Activated T-helper 1 cell treated with anti-CD3 and anti-CD28 coated beads, Interleukin-12 subunit alpha, Interleukin-12 subunit beta, Interleukin-2, Interleukin-4 antibody, amounts not matched to agents 30 ng/mL and 10 ng/mL and 1 ng/mL, durations not matched to agents 14 hours and 24 hours and 36 hours (primary cell): ENCODE measurements at regions of chr1 and their contacts with region 1.

Region 1: GRCh38 chr1:25675729-25676476 is 59.3 kb downstream of the MAN1C1 start:
- DNase-seq: peak; percentile 83
- H3K4me3 Mint-ChIP-seq: peak overlapping the region; percentile 47
- H3K27ac Mint-ChIP-seq: peak overlapping the region; percentile 85
- H3K4me1 Mint-ChIP-seq: peaks cover 54% of the 10 kb centered on the region
- H3K27me3 Mint-ChIP-seq: peaks cover 81% of the 10 kb centered on the region

Region 2: GRCh38 chr1:25543425-25544242 is 132.3 kb before region 1 on chr1 and contains the start of gene LDLRAP1:
- intact Hi-C with region 1: no loop called
- DNase-seq: peak; percentile 59
- H3K4me3 Mint-ChIP-seq: peak within 1 kb of the TSS; percentile 76
- H3K27ac Mint-ChIP-seq: no peak within 1 kb of the TSS
- H3K4me1 Mint-ChIP-seq: peaks cover 8% of the 10 kb centered on the region
- H3K27me3 Mint-ChIP-seq: peaks cover 11% of the 10 kb centered on the region
- total RNA-seq, gene LDLRAP1: 4.6 and 5.3 TPM in 2 replicates

Region 3: GRCh38 chr1:25616095-25616986 is 59.6 kb before region 1 on chr1 and contains the start of gene MAN1C1:
- intact Hi-C with region 1: loop called (anchors 1 kb)
- DNase-seq: peak; percentile 76
- H3K4me3 Mint-ChIP-seq: peak within 1 kb of the TSS; percentile 63
- H3K27ac Mint-ChIP-seq: peak within 1 kb of the TSS; percentile 57
- H3K4me1 Mint-ChIP-seq: peaks cover 45% of the 10 kb centered on the region
- H3K27me3 Mint-ChIP-seq: peaks cover 71% of the 10 kb centered on the region
- total RNA-seq, gene MAN1C1: 0.83 and 0.98 TPM in 2 replicates

Region 4: GRCh38 chr1:25692560-25692959 is 16.7 kb after region 1 on chr1:
- intact Hi-C with region 1: loop called (anchors 2 kb)
- DNase-seq: no peak
- H3K4me3 Mint-ChIP-seq: no peak overlapping the region
- H3K27ac Mint-ChIP-seq: no peak overlapping the region
- H3K4me1 Mint-ChIP-seq: peaks cover 8% of the 10 kb centered on the region
- H3K27me3 Mint-ChIP-seq: peaks cover 75% of the 10 kb centered on the region

Region 5: DNA sequence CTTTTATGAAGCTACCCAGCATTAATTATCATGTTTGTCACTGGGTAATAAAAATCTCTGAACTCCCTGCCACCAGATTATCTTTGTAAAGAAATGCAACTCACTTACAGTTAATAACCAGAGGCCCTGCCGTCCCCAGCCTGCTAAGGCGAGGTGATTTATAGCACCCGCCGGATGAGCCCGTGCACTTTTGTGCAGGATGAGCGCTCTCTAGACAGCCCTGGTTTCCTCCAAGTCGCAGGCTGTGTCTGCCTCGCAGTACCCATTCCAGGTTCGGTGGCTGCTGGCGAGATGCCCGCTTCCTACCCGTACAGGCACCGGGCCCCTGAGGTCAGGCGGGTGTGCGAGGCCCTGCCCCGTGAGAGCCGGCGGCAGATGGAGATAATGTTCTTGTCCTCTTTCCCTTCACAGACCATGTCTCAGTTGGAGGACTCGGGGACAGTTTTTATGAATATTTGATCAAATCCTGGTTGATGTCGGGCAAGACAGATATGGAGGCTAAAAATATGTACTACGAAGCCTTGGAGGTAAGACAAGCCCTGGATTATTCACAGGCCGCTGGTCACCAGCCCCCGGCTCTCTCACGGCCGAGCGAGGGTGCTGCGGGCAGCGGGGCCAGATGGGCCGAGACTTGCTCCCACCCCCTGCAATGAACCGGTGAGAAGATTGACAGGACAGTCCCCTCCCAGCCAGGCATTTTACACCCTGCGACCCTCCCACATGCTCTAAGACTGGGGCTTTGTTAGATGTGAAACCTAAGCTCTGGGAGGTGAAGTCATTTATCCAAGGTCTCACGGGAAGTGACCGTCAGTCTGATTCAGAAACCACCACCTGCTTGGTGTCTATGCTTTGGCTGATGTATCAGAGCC is 95.6 kb after region 1 on chr1:
- intact Hi-C with region 1: loop called (anchors 1 kb)
- DNase-seq: no peak
- H3K4me3 Mint-ChIP-seq: no peak overlapping the region
- H3K27ac Mint-ChIP-seq: no peak overlapping the region
- H3K4me1 Mint-ChIP-seq: peaks cover 29% of the 10 kb centered on the region
- H3K27me3 Mint-ChIP-seq: peaks cover 42% of the 10 kb centered on the region

Region 6: GRCh38 chr1:25927521-25928265 is 251.8 kb after region 1 on chr1:
- intact Hi-C with region 1: no loop called
- DNase-seq: no peak
- H3K4me3 Mint-ChIP-seq: no peak overlapping the region
- H3K27ac Mint-ChIP-seq: no peak overlapping the region
- H3K4me1 Mint-ChIP-seq: peaks cover 7% of the 10 kb centered on the region
- H3K27me3 Mint-ChIP-seq: peaks cover 42% of the 10 kb centered on the region